Esophagus squamous epithelium (tissue), 5 donors: ENCODE measurements at regions of chr10 and their contacts with region 1.

Region 1: DNA sequence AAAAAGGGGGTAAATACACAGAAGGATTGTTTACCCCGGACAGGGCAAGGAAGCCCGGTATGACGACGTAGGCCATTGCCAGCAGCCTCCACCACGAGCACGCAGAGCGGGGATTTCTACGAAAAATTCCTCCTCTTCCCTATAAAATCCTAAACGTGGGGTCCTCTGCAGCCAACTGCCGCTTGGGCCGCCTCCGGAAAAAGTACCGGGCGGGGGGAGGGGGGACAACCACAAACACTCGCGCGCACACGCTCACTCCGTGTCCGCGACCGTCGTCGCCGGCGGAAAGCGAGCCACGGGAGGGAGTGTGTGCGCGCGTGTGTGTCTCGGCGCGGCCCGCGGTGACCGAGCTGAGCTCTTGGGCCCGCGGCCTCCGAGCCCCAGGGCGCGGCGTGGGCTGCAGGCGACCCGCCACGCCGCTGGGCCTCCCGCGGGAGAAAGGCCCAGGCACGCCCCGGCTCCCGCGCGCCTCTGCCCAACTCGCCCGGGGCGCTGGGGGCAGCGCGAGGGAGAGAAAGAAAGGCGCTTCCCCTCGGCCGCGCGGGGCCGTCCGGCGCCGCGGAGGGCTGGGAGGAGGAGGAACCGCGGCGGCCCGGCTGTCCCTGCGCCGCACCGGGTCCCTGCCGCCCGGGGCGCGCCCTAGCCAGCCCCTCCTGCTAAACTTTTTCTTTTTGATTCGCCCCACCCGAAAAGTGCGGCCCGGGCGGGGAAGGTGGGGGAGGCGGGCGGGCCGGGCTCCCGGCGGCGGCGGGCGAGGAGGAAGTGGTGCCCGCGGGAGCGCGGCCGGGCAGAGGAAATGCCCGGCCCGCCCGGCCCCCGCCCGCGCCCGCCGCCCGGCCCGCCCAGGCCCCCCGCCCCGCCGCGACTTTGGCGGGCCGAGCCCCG is 1.5 kb downstream of the CTBP2 start:
- DNase-seq: no peak
- H3K4me3 ChIP-seq: peak overlapping the region; percentile 72 to 97 (median 86)
- H3K27ac ChIP-seq: peak overlapping the region; percentile 97 to 99 (median 98)
- H3K4me1 ChIP-seq: peaks cover 13 to 67% (median 33%) of the 10 kb centered on the region in 3 donors
- H3K27me3 ChIP-seq: no peaks in the 10 kb centered on the region
- CTCF ChIP-seq: peak in 1 of 6 experiments; percentile 21
- POLR2A ChIP-seq: peak in 2 of 4 donors; percentile 65 to 66

Region 2: GRCh38 chr10:125060826-125061556 is 97.9 kb before region 1 on chr10:
- intact Hi-C with region 1: loop called (anchors 10 kb)
- DNase-seq: no peak
- H3K4me3 ChIP-seq: peak overlapping the region in 2 of 4 donors; percentile 25 to 27
- H3K27ac ChIP-seq: peak overlapping the region; percentile 62 to 92 (median 90)
- H3K4me1 ChIP-seq: peaks cover 66 to 100% (median 96%) of the 10 kb centered on the region in 3 donors
- H3K27me3 ChIP-seq: no peaks in the 10 kb centered on the region
- CTCF ChIP-seq: peak; percentile 68 to 91 (median 82)
- POLR2A ChIP-seq: no peak